ENCODE measurements at regions of chr11 and their contacts with region 1.

Region 1: GRCh38 chr11:9506489-9507276 is 45.9 kb downstream of the ZNF143 start:
- DNase-seq: no peak
- H3K4me3 ChIP-seq: no peak overlapping the region
- H3K27me3 ChIP-seq: no peaks in the 10 kb centered on the region
- CTCF ChIP-seq: peak; percentile 86

Region 2: DNA sequence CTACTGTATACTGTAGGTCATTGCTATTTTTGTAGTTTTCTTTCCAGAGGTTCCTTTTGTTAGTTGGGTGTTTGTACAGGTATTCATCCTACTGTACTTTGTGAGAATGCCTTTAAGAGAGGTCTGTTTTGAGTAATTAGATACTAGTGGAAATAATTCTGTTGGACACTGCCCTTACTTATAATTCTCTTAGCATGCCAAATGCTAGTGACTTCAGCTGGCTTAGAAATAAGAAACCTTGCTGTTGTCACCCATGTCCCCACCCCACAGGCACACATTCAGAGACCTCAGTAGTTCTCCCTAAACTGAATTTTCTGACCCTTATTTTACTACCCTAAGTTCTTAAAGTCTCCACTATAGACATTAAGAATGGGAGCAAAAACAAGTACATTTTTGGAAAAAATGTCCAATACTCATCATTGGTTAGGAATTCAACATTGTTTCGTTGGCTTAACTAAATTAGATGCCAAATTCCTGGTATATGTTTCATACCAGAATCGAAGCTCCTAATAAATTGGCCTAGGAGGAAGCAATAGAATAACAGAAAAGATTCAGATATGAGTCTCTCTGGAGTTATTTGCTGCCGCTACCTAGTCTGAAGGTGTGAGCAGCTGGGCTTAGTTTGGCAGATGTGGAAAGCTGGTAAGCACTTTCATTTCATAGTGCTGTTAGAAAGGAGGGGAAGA is 17.5 kb before region 1 on chr11:
- CTCF ChIA-PET with region 1: interaction called, 11 read pairs
- POLR2A ChIA-PET with region 1: no interaction called
- DNase-seq: peak; percentile 35
- H3K4me3 ChIP-seq: peak overlapping the region; percentile 8; the same call in 1 of the 2 replicates
- H3K27me3 ChIP-seq: no peaks in the 10 kb centered on the region
- CTCF ChIP-seq: no peak

Region 3: GRCh38 chr11:9525116-9525515 is 18.4 kb after region 1 on chr11:
- CTCF ChIA-PET with region 1: interaction called, 15 read pairs
- POLR2A ChIA-PET with region 1: interaction called, 4 read pairs
- DNase-seq: no peak
- H3K4me3 ChIP-seq: no peak overlapping the region
- H3K27me3 ChIP-seq: no peaks in the 10 kb centered on the region
- CTCF ChIP-seq: no peak

Region 4: GRCh38 chr11:9643751-9644150 is 137.1 kb after region 1 on chr11:
- CTCF ChIA-PET with region 1: no interaction called
- POLR2A ChIA-PET with region 1: no interaction called
- DNase-seq: no peak
- H3K4me3 ChIP-seq: no peak overlapping the region
- H3K27me3 ChIP-seq: no peaks in the 10 kb centered on the region
- CTCF ChIP-seq: no peak

Measured in BJ (cell line).